ENCODE measurements at regions of chr10 and their contacts with region 1.

Region 1: DNA sequence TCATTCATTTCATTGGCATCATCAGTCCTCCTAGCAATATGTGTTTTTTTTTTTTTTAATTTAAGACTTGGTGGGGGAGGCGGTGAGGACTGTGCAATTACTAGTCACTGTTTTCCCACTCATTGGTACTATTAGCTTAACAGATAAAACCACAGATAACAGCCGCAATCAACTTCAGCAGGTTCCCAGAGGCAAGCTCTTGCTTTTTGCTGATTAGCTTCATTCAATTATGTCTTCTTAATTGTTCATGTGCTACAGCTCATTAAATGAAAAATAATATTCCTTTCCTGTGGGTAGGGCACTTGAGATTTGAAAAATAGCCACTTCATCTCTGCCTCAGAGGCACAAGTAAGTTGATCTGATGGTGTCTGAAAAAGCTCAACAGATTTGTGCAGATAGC is 215.5 kb downstream of the PCDH15 start:
- DNase-seq: peak; percentile 27
- H3K4me3 ChIP-seq: no peak overlapping the region
- H3K27ac ChIP-seq: no peak overlapping the region
- H3K4me1 ChIP-seq: peaks cover 18% of the 10 kb centered on the region
- H3K27me3 ChIP-seq: no peaks in the 10 kb centered on the region
- CTCF ChIP-seq: no peak
- POLR2A ChIP-seq: no peak

Region 2: DNA sequence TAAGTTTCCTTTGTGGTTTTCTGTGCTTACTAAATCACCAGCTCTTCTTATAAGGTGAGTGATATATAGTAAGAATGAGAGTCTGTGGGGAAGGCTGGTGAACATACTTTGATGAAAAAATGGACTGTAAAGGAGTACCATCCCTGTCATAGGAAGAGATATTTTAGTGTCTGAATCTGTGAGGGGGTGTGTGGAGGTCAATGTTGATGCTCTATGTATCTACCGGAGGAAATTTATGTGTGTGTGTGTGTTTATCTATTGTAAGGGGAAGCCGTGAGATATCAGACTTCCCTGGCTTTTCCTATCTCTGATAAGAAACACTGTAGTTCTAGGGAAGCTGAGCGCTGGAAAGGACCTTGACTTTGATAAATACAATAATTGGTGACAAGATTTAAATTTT is 36.4 kb after region 1 on chr10:
- CTCF ChIA-PET with region 1: interaction called, 8 read pairs
- POLR2A ChIA-PET with region 1: no interaction called
- dilution Hi-C with region 1: no loop called
- intact Hi-C with region 1: loop called (anchors 5 kb)
- DNase-seq: peak; percentile 80
- H3K4me3 ChIP-seq: peak overlapping the region in 2 of 3 experiments; percentile 39 to 47
- H3K27ac ChIP-seq: peak overlapping the region; percentile 52
- H3K4me1 ChIP-seq: peaks cover 11% of the 10 kb centered on the region
- H3K27me3 ChIP-seq: no peaks in the 10 kb centered on the region
- CTCF ChIP-seq: no peak
- POLR2A ChIP-seq: peak; percentile 45

Measured in endothelial cell of umbilical vein (primary cell).